ENCODE measurements at regions of chr22 and their contacts with region 1.

Region 1: GRCh38 chr22:43955040-43955882 is at the start of gene SAMM50:
- DNase-seq: peak; percentile 81 to 94 (median 89)
- ATAC-seq: peak; percentile 97 to 98 (median 98)
- H3K4me3 ChIP-seq: peak within 1 kb of the TSS; percentile 88 to 89
- H3K4me3 Mint-ChIP-seq: peak within 1 kb of the TSS; percentile 92 to 99 (median 96)
- H3K27ac ChIP-seq: peak within 1 kb of the TSS; percentile 72
- H3K27ac Mint-ChIP-seq: peak within 1 kb of the TSS; percentile 94 to 95
- H3K4me1 ChIP-seq: peaks cover 9 to 25% of the 10 kb centered on the region in 2 experiments
- H3K4me1 Mint-ChIP-seq: peaks cover 34 to 50% (median 37%) of the 10 kb centered on the region in 3 donors
- H3K27me3 ChIP-seq: peaks cover 0 to 11% of the 10 kb centered on the region in 2 experiments
- H3K27me3 Mint-ChIP-seq: peaks cover 5 to 9% of the 10 kb centered on the region in 2 donors
- total RNA-seq, gene SAMM50: 27.1 to 40.4 (median 33.2) TPM

Region 2: GRCh38 chr22:45677063-45677462 is 1721.8 kb after region 1 on chr22:
- CTCF ChIA-PET with region 1: no interaction called
- POLR2A ChIA-PET with region 1: interaction called in 1 of 2 experiments, 10 read pairs
- DNase-seq: no peak
- ATAC-seq: no peak
- H3K4me3 ChIP-seq: no peak overlapping the region
- H3K4me3 Mint-ChIP-seq: no peak overlapping the region
- H3K27ac ChIP-seq: no peak overlapping the region
- H3K27ac Mint-ChIP-seq: no peak overlapping the region
- H3K4me1 ChIP-seq: peaks cover 10 to 18% of the 10 kb centered on the region in 2 experiments
- H3K4me1 Mint-ChIP-seq: peaks cover 59 to 61% (median 61%) of the 10 kb centered on the region in 3 donors
- H3K27me3 ChIP-seq: no peaks in the 10 kb centered on the region
- H3K27me3 Mint-ChIP-seq: no peaks in the 10 kb centered on the region